HepG2 (cell line): ENCODE measurements at regions of chr4 and their contacts with region 1.

Region 1: GRCh38 chr4:166594326-166594946 is 639.9 kb downstream of the SPOCK3 start:
- DNase-seq: peak; percentile 29
- ATAC-seq: peak; percentile 97
- H3K4me3 ChIP-seq: no peak overlapping the region
- H3K27ac ChIP-seq: no peak overlapping the region
- H3K4me1 ChIP-seq: no peaks in the 10 kb centered on the region
- H3K27me3 ChIP-seq: no peaks in the 10 kb centered on the region; a peak in 1 of 5 replicates
- CTCF ChIP-seq: peak; percentile 78
- EP300 ChIP-seq: no peak
- POLR2A ChIP-seq: no peak
- RAD21 ChIP-seq: peak; percentile 34; the same call in 1 of the 2 replicates

Region 2: DNA sequence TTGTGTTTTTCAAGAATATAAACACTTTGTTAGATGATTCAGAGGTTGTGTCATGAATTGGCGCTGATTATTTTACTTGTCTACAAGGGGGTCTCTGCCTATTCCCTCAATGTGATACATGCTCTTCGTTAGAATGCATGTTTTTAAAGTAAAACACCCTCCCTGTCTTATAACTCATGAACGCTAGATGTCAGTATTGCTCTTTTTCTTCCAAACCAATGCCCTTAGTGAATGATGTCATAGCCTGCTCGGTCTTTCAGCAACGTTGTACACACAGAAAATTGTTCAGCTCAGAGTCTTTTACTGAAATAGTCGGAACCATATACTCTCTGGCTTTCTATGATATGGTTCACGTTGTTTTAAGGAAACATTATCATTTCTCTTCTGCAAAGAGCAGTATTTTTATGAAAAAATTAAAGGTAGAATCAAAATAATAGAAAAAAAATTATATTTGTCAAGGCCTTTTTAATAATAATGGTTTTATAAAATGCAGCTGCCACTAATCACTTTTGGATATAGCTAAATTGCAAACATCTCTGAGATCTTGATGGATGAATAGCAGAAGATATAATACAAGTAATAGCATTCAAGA is 428.5 kb before region 1 on chr4:
- CTCF ChIA-PET with region 1: interaction called, 6 read pairs
- POLR2A ChIA-PET with region 1: no interaction called
- in situ Hi-C with region 1: loop called (anchors 5 kb)
- intact Hi-C with region 1: no loop called
- DNase-seq: peak; percentile 73
- ATAC-seq: peak; percentile 96
- H3K4me3 ChIP-seq: no peak overlapping the region
- H3K27ac ChIP-seq: no peak overlapping the region
- H3K4me1 ChIP-seq: no peaks in the 10 kb centered on the region
- H3K27me3 ChIP-seq: no peaks in the 10 kb centered on the region
- CTCF ChIP-seq: peak; percentile 85
- EP300 ChIP-seq: no peak
- POLR2A ChIP-seq: no peak
- RAD21 ChIP-seq: peak; percentile 62

Region 3: GRCh38 chr4:166252487-166253402 is 341.7 kb before region 1 on chr4:
- CTCF ChIA-PET with region 1: no interaction called
- POLR2A ChIA-PET with region 1: no interaction called
- in situ Hi-C with region 1: no loop called
- intact Hi-C with region 1: loop called (anchors 10 kb)
- DNase-seq: peak; percentile 10
- ATAC-seq: peak; percentile 47; the same call in 1 of the 3 replicates
- H3K4me3 ChIP-seq: no peak overlapping the region
- H3K27ac ChIP-seq: no peak overlapping the region
- H3K4me1 ChIP-seq: no peaks in the 10 kb centered on the region
- H3K27me3 ChIP-seq: no peaks in the 10 kb centered on the region
- CTCF ChIP-seq: peak; percentile 46
- EP300 ChIP-seq: no peak
- POLR2A ChIP-seq: no peak
- RAD21 ChIP-seq: no peak

Region 4: DNA sequence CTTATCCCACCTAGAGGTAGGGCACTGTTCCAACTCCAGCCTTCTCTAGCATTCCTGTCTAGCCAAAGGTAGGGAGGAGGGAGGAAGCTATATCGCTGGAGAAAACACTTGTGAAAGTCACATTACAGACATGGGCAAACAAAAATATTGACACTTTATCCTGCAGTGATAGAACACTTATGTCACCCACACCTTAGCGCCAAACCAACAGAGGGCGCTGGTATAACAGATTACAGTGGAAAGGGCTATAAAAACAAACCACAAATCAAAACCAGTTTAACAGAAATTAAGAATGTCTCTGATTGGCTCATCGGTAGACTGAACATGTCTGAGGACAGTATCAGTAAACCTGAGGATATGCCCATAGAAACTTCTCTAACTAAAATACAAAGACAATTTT is 270.1 kb before region 1 on chr4:
- CTCF ChIA-PET with region 1: interaction called, 11 read pairs
- POLR2A ChIA-PET with region 1: no interaction called
- in situ Hi-C with region 1: loop called (anchors 25 kb)
- intact Hi-C with region 1: loop called (anchors 1 kb)
- DNase-seq: peak; percentile 38
- ATAC-seq: peak; percentile 92
- H3K4me3 ChIP-seq: no peak overlapping the region
- H3K27ac ChIP-seq: no peak overlapping the region
- H3K4me1 ChIP-seq: no peaks in the 10 kb centered on the region
- H3K27me3 ChIP-seq: no peaks in the 10 kb centered on the region
- CTCF ChIP-seq: peak; percentile 56
- EP300 ChIP-seq: no peak
- POLR2A ChIP-seq: no peak
- RAD21 ChIP-seq: no peak

Region 5: GRCh38 chr4:166335256-166335938 is 259.0 kb before region 1 on chr4:
- CTCF ChIA-PET with region 1: no interaction called
- POLR2A ChIA-PET with region 1: no interaction called
- in situ Hi-C with region 1: loop called (anchors 25 kb)
- intact Hi-C with region 1: no loop called
- DNase-seq: no peak
- ATAC-seq: no peak
- H3K4me3 ChIP-seq: no peak overlapping the region
- H3K27ac ChIP-seq: no peak overlapping the region
- H3K4me1 ChIP-seq: no peaks in the 10 kb centered on the region
- H3K27me3 ChIP-seq: no peaks in the 10 kb centered on the region
- CTCF ChIP-seq: no peak
- EP300 ChIP-seq: no peak
- POLR2A ChIP-seq: no peak
- RAD21 ChIP-seq: no peak

Region 6: DNA sequence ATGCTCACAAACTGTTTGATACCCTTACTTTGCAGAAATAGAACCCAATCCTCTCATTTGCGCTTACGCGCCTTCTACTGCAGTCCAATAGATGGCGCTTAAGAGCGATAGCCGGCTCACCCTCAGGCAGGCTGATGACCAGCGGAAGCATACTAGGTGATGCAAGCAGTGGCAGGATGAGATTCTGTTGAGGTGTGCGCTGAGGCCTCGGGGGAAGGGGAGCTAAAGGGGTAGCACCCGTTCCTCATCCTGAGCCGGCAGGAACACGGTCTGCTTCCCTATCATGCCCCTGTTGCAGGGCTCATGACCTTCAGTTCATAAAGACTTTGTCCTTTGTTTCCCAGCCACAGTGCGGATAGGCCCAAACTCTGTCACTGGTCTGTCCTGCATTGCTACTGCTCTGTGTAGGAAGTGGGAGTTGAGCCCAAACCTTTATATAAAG is 92.5 kb before region 1 on chr4:
- CTCF ChIA-PET with region 1: interaction called, 5 read pairs
- POLR2A ChIA-PET with region 1: no interaction called
- in situ Hi-C with region 1: no loop called
- intact Hi-C with region 1: loop called (anchors 1 kb)
- DNase-seq: peak; percentile 40
- ATAC-seq: peak; percentile 100
- H3K4me3 ChIP-seq: no peak overlapping the region
- H3K27ac ChIP-seq: no peak overlapping the region
- H3K4me1 ChIP-seq: no peaks in the 10 kb centered on the region
- H3K27me3 ChIP-seq: no peaks in the 10 kb centered on the region
- CTCF ChIP-seq: peak; percentile 80
- EP300 ChIP-seq: no peak
- POLR2A ChIP-seq: no peak
- RAD21 ChIP-seq: no peak

Region 7: DNA sequence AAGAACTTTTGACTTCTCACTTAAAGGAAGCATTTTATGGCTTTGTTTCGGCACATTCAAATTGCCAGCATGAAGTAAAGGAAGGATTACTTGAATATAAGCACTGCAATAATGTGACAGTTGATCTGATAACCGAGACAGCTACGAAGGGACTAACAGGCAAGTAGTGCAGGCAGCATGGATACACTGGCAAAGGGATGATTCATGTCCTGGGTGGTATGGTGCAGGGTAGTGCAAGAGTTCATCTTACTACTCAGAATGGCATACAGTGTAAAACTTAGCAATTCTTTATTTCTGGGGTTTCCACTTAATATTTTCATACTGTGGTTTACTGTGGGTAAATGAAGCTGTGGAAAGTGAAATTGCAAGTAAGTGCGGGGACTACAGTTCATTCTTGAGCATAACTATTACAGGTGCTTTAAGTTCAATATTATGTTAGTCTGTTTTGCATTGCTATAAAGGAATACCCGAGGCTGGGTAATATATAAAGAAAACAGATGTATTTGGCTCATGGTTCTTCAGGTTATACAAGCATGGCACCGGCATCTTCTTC is 28.1 kb after region 1 on chr4:
- CTCF ChIA-PET with region 1: no interaction called
- POLR2A ChIA-PET with region 1: no interaction called
- in situ Hi-C with region 1: no loop called
- intact Hi-C with region 1: no loop called
- DNase-seq: no peak
- ATAC-seq: no peak
- H3K4me3 ChIP-seq: no peak overlapping the region
- H3K27ac ChIP-seq: no peak overlapping the region
- H3K4me1 ChIP-seq: no peaks in the 10 kb centered on the region
- H3K27me3 ChIP-seq: no peaks in the 10 kb centered on the region
- CTCF ChIP-seq: no peak
- EP300 ChIP-seq: no peak
- POLR2A ChIP-seq: no peak
- RAD21 ChIP-seq: no peak